Endothelial cell of umbilical vein (primary cell): ENCODE measurements at regions of chr11 and their contacts with region 1.

Region 1: GRCh38 chr11:65558002-65558931 is at the start of gene LTBP3:
- DNase-seq: peak; percentile 84
- H3K4me3 ChIP-seq: peak within 1 kb of the TSS; percentile 25 to 52 (median 48)
- H3K27ac ChIP-seq: peak within 1 kb of the TSS; percentile 78
- H3K4me1 ChIP-seq: peaks cover 60% of the 10 kb centered on the region
- H3K27me3 ChIP-seq: no peaks in the 10 kb centered on the region
- CTCF ChIP-seq: no peak
- POLR2A ChIP-seq: peak; percentile 62
- total RNA-seq, gene LTBP3: 120 and 121 TPM in 2 replicates

Region 2: GRCh38 chr11:64990222-64990923 is 567.9 kb before region 1 on chr11:
- CTCF ChIA-PET with region 1: no interaction called
- POLR2A ChIA-PET with region 1: no interaction called
- dilution Hi-C with region 1: no loop called
- intact Hi-C with region 1: no loop called
- DNase-seq: peak; percentile 52
- H3K4me3 ChIP-seq: peak overlapping the region in 1 of 3 experiments; percentile 10
- H3K27ac ChIP-seq: peak overlapping the region; percentile 40
- H3K4me1 ChIP-seq: peaks cover 14% of the 10 kb centered on the region
- H3K27me3 ChIP-seq: no peaks in the 10 kb centered on the region
- CTCF ChIP-seq: no peak
- POLR2A ChIP-seq: no peak

Region 3: GRCh38 chr11:65102142-65103095 is 455.8 kb before region 1 on chr11:
- CTCF ChIA-PET with region 1: no interaction called
- POLR2A ChIA-PET with region 1: no interaction called
- dilution Hi-C with region 1: no loop called
- intact Hi-C with region 1: no loop called
- DNase-seq: peak; percentile 48
- H3K4me3 ChIP-seq: no peak overlapping the region
- H3K27ac ChIP-seq: no peak overlapping the region
- H3K4me1 ChIP-seq: peaks cover 4% of the 10 kb centered on the region
- H3K27me3 ChIP-seq: no peaks in the 10 kb centered on the region
- CTCF ChIP-seq: no peak
- POLR2A ChIP-seq: no peak

Region 4: DNA sequence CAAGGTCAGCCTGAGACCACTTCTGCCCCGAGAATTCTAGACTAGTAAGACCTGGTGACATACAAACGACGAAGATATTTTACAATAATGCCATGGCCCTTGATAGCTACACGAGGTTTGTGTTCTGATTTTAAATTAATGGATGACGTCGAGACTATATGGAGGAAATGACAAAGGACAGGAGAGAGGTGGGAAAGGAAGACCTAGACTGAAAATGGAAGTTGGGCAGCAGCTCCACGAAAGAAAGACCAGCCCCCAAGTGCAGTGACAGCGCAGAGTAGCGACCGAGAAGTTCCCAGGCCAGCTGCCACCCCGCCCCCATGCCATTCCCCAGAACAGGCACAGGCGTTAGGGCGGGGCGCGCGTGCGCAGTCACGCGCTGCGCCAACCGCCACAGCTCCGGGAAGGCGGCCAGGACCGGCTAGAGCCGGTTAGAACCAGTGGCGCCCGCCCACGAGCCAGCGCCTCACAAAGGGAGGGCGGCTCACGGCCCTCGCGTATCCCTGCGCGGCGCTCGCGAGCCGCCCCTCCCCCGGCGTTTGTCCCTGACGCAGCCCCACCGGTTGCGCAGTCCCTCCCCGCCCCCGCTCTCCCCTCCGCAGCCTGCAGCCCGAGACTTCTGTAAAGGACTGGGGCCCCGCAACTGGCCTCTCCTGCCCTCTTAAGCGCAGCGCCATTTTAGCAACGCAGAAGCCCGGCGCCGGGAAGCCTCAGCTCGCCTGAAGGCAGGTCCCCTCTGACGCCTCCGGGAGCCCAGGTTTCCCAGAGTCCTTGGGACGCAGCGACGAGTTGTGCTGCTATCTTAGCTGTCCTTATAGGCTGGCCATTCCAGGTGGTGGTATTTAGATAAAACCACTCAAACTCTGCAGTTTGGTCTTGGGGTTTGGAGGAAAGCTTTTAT is 60.9 kb before region 1 on chr11:
- CTCF ChIA-PET with region 1: no interaction called
- POLR2A ChIA-PET with region 1: no interaction called
- dilution Hi-C with region 1: no loop called
- intact Hi-C with region 1: no loop called
- DNase-seq: peak; percentile 99
- H3K4me3 ChIP-seq: peak overlapping the region; percentile 0 to 91 (median 48)
- H3K27ac ChIP-seq: peak overlapping the region; percentile 95
- H3K4me1 ChIP-seq: peaks cover 45% of the 10 kb centered on the region
- H3K27me3 ChIP-seq: no peaks in the 10 kb centered on the region
- CTCF ChIP-seq: no peak
- POLR2A ChIP-seq: peak; percentile 98

Region 5: DNA sequence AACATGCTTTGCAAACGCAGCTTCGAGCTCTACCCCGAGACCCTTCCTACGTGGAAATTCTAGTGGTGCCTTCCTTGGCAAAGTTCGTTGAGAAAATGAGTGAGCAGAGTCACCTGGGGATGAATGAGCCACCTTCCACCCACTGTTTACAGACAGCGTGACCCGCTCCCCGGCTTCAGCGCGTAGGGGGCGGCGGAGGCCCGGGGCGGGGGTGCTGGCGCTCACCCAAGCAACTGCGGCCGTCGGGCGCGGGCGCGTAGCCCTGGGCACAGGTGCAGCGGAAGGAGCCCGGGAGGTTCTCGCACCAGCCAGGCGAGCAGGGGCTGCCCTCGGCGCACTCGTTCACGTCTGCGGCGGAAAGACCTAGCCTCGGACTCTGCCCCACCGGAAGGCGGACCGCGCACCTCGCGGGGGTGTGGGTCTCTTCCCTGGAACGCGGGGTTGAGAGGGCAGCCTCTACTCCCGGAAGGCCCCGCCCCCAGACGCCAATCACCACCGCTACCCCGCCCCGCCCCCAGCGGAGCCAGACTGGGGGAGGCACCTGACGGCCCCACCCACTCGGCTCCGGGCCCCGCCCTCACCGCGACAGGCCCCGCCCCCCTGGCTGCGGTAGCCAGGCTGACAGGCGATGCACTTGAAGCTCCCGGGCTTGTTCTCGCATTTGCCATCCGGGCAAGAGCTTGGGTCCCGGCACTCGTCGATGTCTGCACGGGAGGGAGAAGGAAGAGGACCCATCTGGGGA is 11.9 kb before region 1 on chr11:
- CTCF ChIA-PET with region 1: interaction called, 54 read pairs
- POLR2A ChIA-PET with region 1: no interaction called
- dilution Hi-C with region 1: no loop called
- intact Hi-C with region 1: loop called (anchors 2 kb)
- DNase-seq: peak; percentile 44
- H3K4me3 ChIP-seq: no peak overlapping the region
- H3K27ac ChIP-seq: no peak overlapping the region
- H3K4me1 ChIP-seq: peaks cover 1% of the 10 kb centered on the region
- H3K27me3 ChIP-seq: no peaks in the 10 kb centered on the region
- CTCF ChIP-seq: no peak
- POLR2A ChIP-seq: no peak

Region 6: GRCh38 chr11:65588199-65589054 is 30.2 kb after region 1 on chr11:
- CTCF ChIA-PET with region 1: interaction called, 17 read pairs
- POLR2A ChIA-PET with region 1: no interaction called
- dilution Hi-C with region 1: no loop called
- intact Hi-C with region 1: no loop called
- DNase-seq: peak; percentile 54
- H3K4me3 ChIP-seq: no peak overlapping the region
- H3K27ac ChIP-seq: no peak overlapping the region
- H3K4me1 ChIP-seq: peaks cover 7% of the 10 kb centered on the region
- H3K27me3 ChIP-seq: no peaks in the 10 kb centered on the region
- CTCF ChIP-seq: peak; percentile 63 to 73
- POLR2A ChIP-seq: no peak